ENCODE measurements at regions of chr11 and their contacts with region 1.

Region 1: GRCh38 chr11:109971184-109971523 is 122.0 kb upstream of the ZC3H12C start:
- DNase-seq: no peak
- H3K4me3 Mint-ChIP-seq: peak overlapping the region; percentile 57
- H3K27ac Mint-ChIP-seq: peak overlapping the region; percentile 82
- H3K4me1 Mint-ChIP-seq: peaks cover 45% of the 10 kb centered on the region
- H3K27me3 Mint-ChIP-seq: peaks cover 7% of the 10 kb centered on the region

Region 2: DNA sequence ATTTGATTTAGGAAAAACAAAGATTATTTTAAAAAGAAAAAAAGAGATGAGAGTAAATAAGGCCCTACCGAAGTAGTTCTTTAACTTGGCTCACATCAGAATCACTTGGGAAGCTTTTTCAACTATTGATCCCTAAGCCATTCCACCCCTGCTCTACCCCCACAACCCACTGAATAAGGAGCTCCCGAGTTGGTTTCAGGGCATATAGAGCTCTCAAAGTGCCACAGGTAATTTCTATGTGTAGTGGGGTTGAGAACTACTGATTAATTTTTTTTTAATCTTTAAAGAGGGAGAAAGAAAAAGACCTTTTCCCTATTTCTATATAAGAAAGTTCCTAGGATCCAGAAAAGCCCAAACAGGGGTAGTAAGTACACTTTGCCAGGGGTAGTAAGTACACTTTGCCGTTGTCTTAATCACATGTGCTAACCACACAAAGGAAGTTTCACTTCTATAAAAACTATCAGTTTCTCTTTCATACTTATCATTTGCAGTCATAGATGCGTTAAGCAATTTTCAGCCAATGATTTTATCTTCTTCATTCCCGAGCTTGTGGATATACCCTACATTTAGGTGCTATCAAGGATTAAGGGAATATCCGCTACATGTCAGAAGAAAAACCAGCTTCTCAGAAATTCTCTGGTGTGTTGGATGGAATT is 13.6 kb after region 1 on chr11:
- intact Hi-C with region 1: loop called (anchors 1 kb)
- DNase-seq: no peak
- H3K4me3 Mint-ChIP-seq: peak overlapping the region; percentile 23
- H3K27ac Mint-ChIP-seq: no peak overlapping the region
- H3K4me1 Mint-ChIP-seq: peaks cover 19% of the 10 kb centered on the region
- H3K27me3 Mint-ChIP-seq: peaks cover 11% of the 10 kb centered on the region